HCT116 (cell line): ENCODE measurements at regions of chr9 and their contacts with region 1.

Region 1: GRCh38 chr9:92270511-92270910 is 23.0 kb downstream of the IARS1 start:
- DNase-seq: no peak
- ATAC-seq: no peak
- H3K4me3 ChIP-seq: no peak overlapping the region
- H3K27ac ChIP-seq: no peak overlapping the region
- H3K4me1 ChIP-seq: no peaks in the 10 kb centered on the region
- H3K27me3 ChIP-seq: no peaks in the 10 kb centered on the region
- CTCF ChIP-seq: no peak
- POLR2A ChIP-seq: no peak
- RAD21 ChIP-seq: no peak

Region 2: GRCh38 chr9:92254381-92255337 is 15.9 kb before region 1 on chr9:
- CTCF ChIA-PET with region 1: no interaction called
- POLR2A ChIA-PET with region 1: no interaction called
- RAD21 ChIA-PET with region 1: no interaction called
- intact Hi-C with region 1: no loop called
- DNase-seq: no peak
- ATAC-seq: peak; percentile 35; the same call in 1 of the 2 replicates
- H3K4me3 ChIP-seq: no peak overlapping the region
- H3K27ac ChIP-seq: no peak overlapping the region
- H3K4me1 ChIP-seq: no peaks in the 10 kb centered on the region
- H3K27me3 ChIP-seq: no peaks in the 10 kb centered on the region
- CTCF ChIP-seq: no peak
- POLR2A ChIP-seq: no peak
- RAD21 ChIP-seq: no peak

Region 3: GRCh38 chr9:92289708-92290390 is 19.3 kb after region 1 on chr9:
- CTCF ChIA-PET with region 1: no interaction called
- POLR2A ChIA-PET with region 1: interaction called, 5 read pairs
- RAD21 ChIA-PET with region 1: no interaction called
- intact Hi-C with region 1: loop called (anchors 2 kb)
- DNase-seq: no peak
- ATAC-seq: no peak
- H3K4me3 ChIP-seq: no peak overlapping the region
- H3K27ac ChIP-seq: no peak overlapping the region
- H3K4me1 ChIP-seq: peaks cover 5 to 22% of the 10 kb centered on the region in 2 experiments; a peak in 3 of 4 replicates
- H3K27me3 ChIP-seq: no peaks in the 10 kb centered on the region
- CTCF ChIP-seq: no peak
- POLR2A ChIP-seq: no peak
- RAD21 ChIP-seq: no peak

Region 4: GRCh38 chr9:92308893-92309292 is 38.4 kb after region 1 on chr9:
- CTCF ChIA-PET with region 1: no interaction called
- POLR2A ChIA-PET with region 1: no interaction called
- RAD21 ChIA-PET with region 1: no interaction called
- intact Hi-C with region 1: no loop called
- DNase-seq: no peak
- ATAC-seq: no peak
- H3K4me3 ChIP-seq: no peak overlapping the region
- H3K27ac ChIP-seq: no peak overlapping the region
- H3K4me1 ChIP-seq: no peaks in the 10 kb centered on the region
- H3K27me3 ChIP-seq: no peaks in the 10 kb centered on the region
- CTCF ChIP-seq: no peak
- POLR2A ChIP-seq: no peak
- RAD21 ChIP-seq: no peak